Ovary (tissue), 10 donors: ENCODE measurements at regions of chr14 and their contacts with region 1.

Region 1: GRCh38 chr14:68911594-68912227 is 67.4 kb downstream of the ACTN1 start:
- DNase-seq: peak; percentile 67 to 84 (median 79)
- H3K4me3 ChIP-seq: no peak overlapping the region
- H3K27ac ChIP-seq: no peak overlapping the region
- H3K4me1 ChIP-seq: no peaks in the 10 kb centered on the region
- H3K27me3 ChIP-seq: no peaks in the 10 kb centered on the region
- CTCF ChIP-seq: peak; percentile 88 to 98 (median 92)
- EP300 ChIP-seq: no peak
- POLR2A ChIP-seq: peak; percentile 15

Region 2: DNA sequence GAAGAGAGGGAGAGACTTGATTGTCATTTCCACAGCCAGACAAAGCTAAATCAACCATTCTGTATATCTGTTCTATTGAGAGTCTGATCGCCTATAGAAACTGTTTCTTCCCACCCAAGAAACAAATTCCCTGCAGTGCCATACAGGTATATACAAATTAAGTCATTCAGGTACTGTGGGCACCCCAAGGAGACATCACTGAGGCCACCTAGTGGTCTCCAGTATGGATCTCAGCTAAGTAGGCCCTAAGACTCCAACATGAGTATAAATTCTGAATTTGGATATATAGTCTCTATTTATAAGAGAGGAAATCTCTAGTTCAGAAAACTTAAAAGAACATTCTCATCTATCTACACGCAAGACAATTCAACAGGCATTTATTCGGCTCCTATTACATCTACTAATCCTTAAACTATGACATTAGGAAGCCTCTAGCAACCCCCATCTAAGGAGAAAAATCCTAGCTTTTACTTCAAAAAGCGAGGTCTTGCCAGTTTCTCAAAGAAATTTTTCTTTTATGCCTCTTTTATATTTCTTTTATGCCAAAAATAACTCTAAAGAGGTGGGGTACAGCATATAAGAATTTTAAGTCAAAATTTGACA is 178.6 kb after region 1 on chr14:
- intact Hi-C with region 1: loop called in 1 of 4 experiments (anchors 5 kb)
- DNase-seq: no peak
- H3K4me3 ChIP-seq: no peak overlapping the region
- H3K27ac ChIP-seq: no peak overlapping the region
- H3K4me1 ChIP-seq: no peaks in the 10 kb centered on the region
- H3K27me3 ChIP-seq: no peaks in the 10 kb centered on the region
- CTCF ChIP-seq: peak in 2 of 3 donors; percentile 23 to 39
- EP300 ChIP-seq: no peak
- POLR2A ChIP-seq: no peak